Activated naive CD4-positive, alpha-beta T cell treated with anti-CD3 and anti-CD28 coated beads for 36 hours (primary cell): ENCODE measurements at regions of chr17 and their contacts with region 1.

Region 1: DNA sequence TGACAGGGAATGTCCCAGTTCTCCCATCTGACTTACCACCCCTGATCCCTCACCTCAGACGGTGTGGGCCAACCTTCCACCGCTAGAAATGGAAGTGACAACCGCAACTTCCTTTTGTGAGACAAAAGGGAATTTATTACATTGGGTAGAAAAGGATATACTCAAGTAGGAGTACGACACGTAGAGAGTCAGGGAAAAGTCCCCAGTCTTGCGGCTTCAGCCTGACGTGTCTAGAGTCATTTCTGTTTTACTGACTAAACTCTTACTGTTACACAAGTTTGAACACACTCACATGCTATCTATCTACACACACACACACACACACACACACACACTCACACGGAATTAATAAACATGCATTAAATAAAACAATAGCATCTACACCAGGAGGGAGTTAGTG is 178.9 kb downstream of the COPRS start:
- DNase-seq: peak; percentile 92
- H3K4me3 Mint-ChIP-seq: peak overlapping the region; percentile 44
- H3K27ac Mint-ChIP-seq: peak overlapping the region; percentile 76
- H3K4me1 Mint-ChIP-seq: peaks cover 13% of the 10 kb centered on the region
- H3K27me3 Mint-ChIP-seq: peaks cover 38% of the 10 kb centered on the region

Region 2: DNA sequence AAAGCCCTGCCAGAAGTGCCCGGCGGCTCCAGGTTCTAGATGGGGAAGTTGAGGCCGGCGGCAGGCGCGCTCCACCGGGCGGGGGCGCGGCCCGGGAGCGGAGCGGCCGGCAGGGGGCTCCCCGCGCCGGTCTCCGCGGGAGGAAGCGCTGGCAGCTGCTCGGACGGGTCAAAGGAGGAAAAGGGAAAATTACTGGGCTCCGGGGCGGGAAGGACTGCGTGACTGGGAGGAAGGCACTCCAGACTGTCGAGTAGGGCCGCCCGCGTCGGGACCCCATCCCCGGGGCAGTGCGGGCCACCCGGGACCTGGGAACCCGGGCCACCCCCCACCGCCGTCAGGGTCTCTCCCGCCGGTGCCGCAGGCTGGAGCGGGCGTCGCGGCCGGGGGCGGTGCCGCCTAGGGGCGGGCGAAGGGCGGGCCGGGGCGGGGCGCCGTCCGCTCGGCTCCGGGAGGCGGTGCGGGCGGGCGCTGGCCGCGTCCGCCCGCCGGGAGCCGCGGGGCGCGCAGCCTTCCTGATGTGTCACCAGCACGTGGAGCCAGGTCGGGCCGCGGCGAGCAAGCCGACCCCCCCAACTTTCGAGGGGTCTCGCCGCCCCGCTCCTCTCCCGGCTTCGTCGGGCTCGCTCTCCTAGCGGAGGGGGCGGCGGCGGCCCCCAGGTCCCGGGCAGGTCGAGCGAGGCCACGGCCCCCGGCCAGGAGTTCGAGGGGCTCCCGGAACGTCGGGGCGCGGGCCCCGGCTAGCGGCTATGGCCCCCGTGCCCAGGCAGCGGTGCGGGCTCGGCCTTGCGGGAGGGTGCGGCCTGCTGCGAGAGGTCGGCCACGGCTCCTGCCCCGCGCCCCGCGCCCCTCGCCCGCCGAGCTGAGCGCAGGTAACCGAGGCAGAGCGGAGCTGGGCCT is 121.1 kb before region 1 on chr17:
- CTCF ChIA-PET with region 1: no interaction called
- intact Hi-C with region 1: loop called (anchors 5 kb)
- DNase-seq: peak; percentile 61
- H3K4me3 Mint-ChIP-seq: peak overlapping the region; percentile 48
- H3K27ac Mint-ChIP-seq: no peak overlapping the region
- H3K4me1 Mint-ChIP-seq: peaks cover 26% of the 10 kb centered on the region
- H3K27me3 Mint-ChIP-seq: no peaks in the 10 kb centered on the region

Region 3: GRCh38 chr17:31907342-31907962 is 227.3 kb after region 1 on chr17:
- CTCF ChIA-PET with region 1: no interaction called
- intact Hi-C with region 1: no loop called
- DNase-seq: peak; percentile 25
- H3K4me3 Mint-ChIP-seq: no peak overlapping the region
- H3K27ac Mint-ChIP-seq: no peak overlapping the region
- H3K4me1 Mint-ChIP-seq: peaks cover 27% of the 10 kb centered on the region
- H3K27me3 Mint-ChIP-seq: peaks cover 7% of the 10 kb centered on the region

Region 4: DNA sequence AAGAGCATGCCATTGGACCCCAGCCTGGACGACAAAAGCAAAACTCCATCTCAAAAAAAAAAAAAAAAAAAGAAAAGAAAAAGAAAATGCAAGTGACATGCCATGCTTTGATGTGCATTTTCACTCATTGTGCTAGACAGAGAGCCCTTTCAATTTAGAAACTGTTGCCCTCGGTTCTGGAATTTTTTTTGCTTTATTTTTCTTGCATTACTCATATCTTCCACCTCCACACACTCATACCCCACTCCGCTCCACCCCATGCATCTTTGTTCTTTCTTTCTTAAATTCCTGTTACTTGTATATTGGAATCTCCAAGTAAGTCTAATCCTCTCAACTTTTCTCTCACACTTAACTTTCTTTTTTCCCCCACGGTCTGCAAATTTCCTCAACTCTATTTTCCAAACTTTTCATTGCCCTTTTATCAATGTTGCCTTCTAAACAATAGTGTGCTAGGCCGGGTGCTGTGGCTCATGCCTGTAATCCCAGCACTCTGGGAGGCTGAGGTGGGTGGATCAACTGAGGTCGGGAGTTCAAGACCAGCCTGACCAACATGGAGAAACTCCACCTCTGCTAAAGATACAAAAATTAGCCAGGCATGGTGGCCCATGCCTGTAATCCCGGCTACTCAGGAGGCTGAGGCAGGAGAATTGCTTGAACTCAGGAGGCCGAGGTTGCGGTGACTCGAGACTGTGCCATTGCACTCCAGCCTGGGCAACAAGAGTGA is 239.8 kb after region 1 on chr17:
- CTCF ChIA-PET with region 1: no interaction called
- intact Hi-C with region 1: loop called (anchors 1 kb)
- DNase-seq: peak; percentile 61
- H3K4me3 Mint-ChIP-seq: peak overlapping the region; percentile 19
- H3K27ac Mint-ChIP-seq: peak overlapping the region; percentile 73
- H3K4me1 Mint-ChIP-seq: peaks cover 35% of the 10 kb centered on the region
- H3K27me3 Mint-ChIP-seq: peaks cover 18% of the 10 kb centered on the region